Activated CD4-positive, alpha-beta T cell treated with anti-CD3 and anti-CD28 coated beads, Interleukin-2, amount 10 ng/mL, durations not matched to agents 24 days and 14 days (primary cell): ENCODE measurements at regions of chr19 and their contacts with region 1.

Region 1: DNA sequence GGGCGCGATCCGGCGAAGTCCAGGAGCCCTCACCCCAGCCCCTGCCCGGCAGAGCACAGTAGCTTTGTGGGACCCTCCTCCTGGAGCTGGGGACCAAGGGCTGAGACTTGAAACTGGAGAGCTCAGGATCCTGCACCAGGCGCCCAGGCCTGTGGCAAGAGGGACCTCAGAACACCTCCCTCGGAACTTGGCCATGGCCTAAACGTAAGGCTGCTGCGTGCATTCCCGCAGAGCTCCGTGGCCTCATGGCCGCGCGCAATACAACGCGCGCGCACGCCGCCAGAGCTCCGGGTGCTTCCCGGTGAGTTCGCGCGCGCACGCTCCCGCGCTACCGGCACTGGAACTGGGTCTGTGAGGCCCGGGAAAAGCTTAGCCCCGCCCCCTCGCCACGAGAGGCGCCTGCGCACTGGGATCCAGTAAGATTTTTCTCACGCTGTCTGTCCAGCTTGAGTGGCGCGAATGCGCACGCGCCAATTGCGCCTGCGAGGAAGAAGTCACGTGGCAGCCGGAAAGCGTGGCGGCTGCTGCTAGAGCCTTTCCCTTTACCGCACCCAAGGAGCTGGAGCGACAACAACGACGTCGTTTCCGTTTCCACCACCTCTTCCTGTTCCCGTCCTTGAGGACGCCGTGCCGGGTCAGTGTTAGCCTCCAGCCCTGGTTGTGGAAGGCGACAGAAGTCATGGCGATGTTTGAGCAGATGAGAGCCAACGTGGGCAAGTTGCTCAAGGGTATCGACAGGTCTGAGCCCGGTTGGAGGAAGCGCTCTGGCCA is at the start of gene EIF3K:
- DNase-seq: peak; percentile 100
- H3K4me3 Mint-ChIP-seq: peak within 1 kb of the TSS; percentile 97
- H3K27ac Mint-ChIP-seq: peak within 1 kb of the TSS; percentile 95
- H3K4me1 Mint-ChIP-seq: peaks cover 35% of the 10 kb centered on the region
- H3K27me3 Mint-ChIP-seq: no peaks in the 10 kb centered on the region
- total RNA-seq, gene EIF3K: 321 and 322 TPM in 2 replicates

Region 2: GRCh38 chr19:38374429-38375176 is 244.2 kb before region 1 on chr19 and contains the start of gene PSMD8:
- intact Hi-C with region 1: loop called (anchors 1 kb)
- DNase-seq: peak; percentile 100
- H3K4me3 Mint-ChIP-seq: peak within 1 kb of the TSS; percentile 100
- H3K27ac Mint-ChIP-seq: peak within 1 kb of the TSS; percentile 98
- H3K4me1 Mint-ChIP-seq: peaks cover 21% of the 10 kb centered on the region
- H3K27me3 Mint-ChIP-seq: no peaks in the 10 kb centered on the region
- total RNA-seq, gene PSMD8: 314 and 315 TPM in 2 replicates

Region 3: GRCh38 chr19:38402967-38403861 is 215.6 kb before region 1 on chr19 and contains the start of gene FAM98C:
- intact Hi-C with region 1: loop called (anchors 1 kb)
- DNase-seq: peak; percentile 99
- H3K4me3 Mint-ChIP-seq: peak within 1 kb of the TSS; percentile 95
- H3K27ac Mint-ChIP-seq: peak within 1 kb of the TSS; percentile 95
- H3K4me1 Mint-ChIP-seq: peaks cover 12% of the 10 kb centered on the region
- H3K27me3 Mint-ChIP-seq: peaks cover 2% of the 10 kb centered on the region
- total RNA-seq, gene FAM98C: 25.3 and 30.4 TPM in 2 replicates

Region 4: GRCh38 chr19:38514812-38515633 is 103.8 kb before region 1 on chr19:
- intact Hi-C with region 1: loop called (anchors 2 kb)
- DNase-seq: peak; percentile 94
- H3K4me3 Mint-ChIP-seq: peak overlapping the region; percentile 26
- H3K27ac Mint-ChIP-seq: no peak overlapping the region
- H3K4me1 Mint-ChIP-seq: peaks cover 22% of the 10 kb centered on the region
- H3K27me3 Mint-ChIP-seq: peaks cover 7% of the 10 kb centered on the region

Region 5: GRCh38 chr19:38544034-38544958 is 74.5 kb before region 1 on chr19:
- intact Hi-C with region 1: loop called (anchors 1 kb)
- DNase-seq: peak; percentile 82
- H3K4me3 Mint-ChIP-seq: peak overlapping the region; percentile 71
- H3K27ac Mint-ChIP-seq: peak overlapping the region; percentile 65
- H3K4me1 Mint-ChIP-seq: peaks cover 27% of the 10 kb centered on the region
- H3K27me3 Mint-ChIP-seq: no peaks in the 10 kb centered on the region

Region 6: DNA sequence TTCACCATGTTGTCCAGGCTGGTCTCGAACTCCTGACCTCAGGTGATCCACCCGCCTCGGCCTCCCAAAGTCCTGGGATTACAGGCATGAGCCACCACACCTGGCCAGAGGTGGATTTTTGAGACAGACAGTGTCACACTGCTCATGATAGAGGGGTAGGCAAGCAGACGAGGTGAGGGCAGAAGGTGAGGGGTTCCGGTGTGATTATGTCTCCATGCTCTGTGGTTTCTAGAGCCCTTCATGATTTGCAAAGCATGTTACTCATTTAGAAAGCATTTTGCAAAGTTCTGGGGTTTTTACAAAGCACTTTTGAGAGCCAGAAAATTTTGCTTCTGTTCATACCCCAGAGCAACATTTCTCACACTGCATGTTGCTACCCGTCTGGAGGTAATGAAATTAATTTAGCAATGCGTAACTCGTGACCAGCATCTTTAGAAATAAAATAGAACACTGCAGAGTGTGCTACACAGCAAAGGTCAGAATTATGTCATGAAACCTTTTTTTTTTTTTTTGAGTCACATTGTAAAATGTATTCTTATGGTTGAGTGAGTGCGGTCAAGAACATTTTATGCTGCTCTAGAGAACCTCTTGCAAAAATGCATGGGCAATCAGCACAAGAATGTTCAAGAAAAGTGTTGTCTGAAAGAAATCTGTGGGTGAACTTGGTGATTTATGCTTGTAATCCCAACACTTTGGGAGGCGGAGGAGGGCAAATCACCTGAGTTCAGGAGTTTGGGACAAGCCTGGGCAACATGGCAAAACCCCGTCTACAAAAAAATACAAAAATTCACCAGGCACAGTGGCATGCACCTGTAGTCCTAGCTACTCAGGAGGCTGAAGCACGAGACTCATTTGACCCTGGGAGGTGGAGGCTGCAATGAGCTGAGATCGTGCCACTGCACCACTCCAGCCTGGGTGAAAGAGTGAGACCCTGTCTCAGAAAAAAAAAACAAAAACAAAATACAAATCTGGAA is 59.1 kb before region 1 on chr19:
- intact Hi-C with region 1: loop called (anchors 2 kb)
- DNase-seq: peak; percentile 78
- H3K4me3 Mint-ChIP-seq: peak overlapping the region; percentile 65
- H3K27ac Mint-ChIP-seq: peak overlapping the region; percentile 76
- H3K4me1 Mint-ChIP-seq: peaks cover 38% of the 10 kb centered on the region
- H3K27me3 Mint-ChIP-seq: peaks cover 23% of the 10 kb centered on the region

Region 7: DNA sequence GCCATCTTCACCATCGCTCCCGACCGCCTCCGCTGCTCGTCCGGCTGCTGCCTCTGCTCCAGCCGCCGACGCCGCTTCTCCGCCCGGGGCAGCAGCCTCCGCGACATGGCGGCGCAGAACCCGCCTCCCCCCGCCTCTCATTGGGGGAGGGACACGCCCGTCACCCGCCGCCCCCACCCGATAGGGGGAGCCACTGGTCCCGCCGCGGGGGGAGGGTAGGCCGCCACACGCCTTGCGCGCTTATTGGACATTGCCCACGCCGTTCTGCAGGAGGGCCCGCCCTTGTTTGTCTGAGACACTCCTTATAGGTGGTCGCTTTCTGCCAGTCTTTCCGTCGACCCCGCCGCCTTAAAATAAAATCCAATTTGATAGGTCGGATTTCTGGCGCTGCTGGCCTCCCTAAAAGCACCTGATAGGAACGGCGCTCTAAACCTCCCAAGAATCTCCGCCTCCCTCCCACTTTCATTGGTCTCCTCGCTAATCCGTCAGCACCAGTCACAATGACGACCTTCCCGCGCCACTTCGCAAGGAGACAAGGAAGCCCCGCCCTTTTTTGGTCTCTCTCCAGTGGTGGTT is 231.2 kb after region 1 on chr19 and contains the start of gene HNRNPL:
- intact Hi-C with region 1: loop called (anchors 2 kb)
- DNase-seq: peak; percentile 100
- H3K4me3 Mint-ChIP-seq: peak within 1 kb of the TSS; percentile 98
- H3K27ac Mint-ChIP-seq: peak within 1 kb of the TSS; percentile 100
- H3K4me1 Mint-ChIP-seq: peaks cover 39% of the 10 kb centered on the region
- H3K27me3 Mint-ChIP-seq: no peaks in the 10 kb centered on the region
- total RNA-seq, gene HNRNPL: 686 and 695 TPM in 2 replicates